ENCODE measurements at regions of chr6 and their contacts with region 1.

Region 1: GRCh38 chr6:20092071-20092566 is 120.2 kb downstream of the MBOAT1 start:
- DNase-seq: no peak
- H3K4me3 Mint-ChIP-seq: no peak overlapping the region
- H3K27ac Mint-ChIP-seq: no peak overlapping the region
- H3K4me1 Mint-ChIP-seq: no peaks in the 10 kb centered on the region
- H3K27me3 Mint-ChIP-seq: no peaks in the 10 kb centered on the region

Region 2: GRCh38 chr6:20126789-20127653 is 34.9 kb after region 1 on chr6:
- intact Hi-C with region 1: loop called (anchors 2 kb)
- DNase-seq: peak; percentile 41
- H3K4me3 Mint-ChIP-seq: no peak overlapping the region
- H3K27ac Mint-ChIP-seq: no peak overlapping the region
- H3K4me1 Mint-ChIP-seq: peaks cover 8% of the 10 kb centered on the region
- H3K27me3 Mint-ChIP-seq: no peaks in the 10 kb centered on the region

Region 3: DNA sequence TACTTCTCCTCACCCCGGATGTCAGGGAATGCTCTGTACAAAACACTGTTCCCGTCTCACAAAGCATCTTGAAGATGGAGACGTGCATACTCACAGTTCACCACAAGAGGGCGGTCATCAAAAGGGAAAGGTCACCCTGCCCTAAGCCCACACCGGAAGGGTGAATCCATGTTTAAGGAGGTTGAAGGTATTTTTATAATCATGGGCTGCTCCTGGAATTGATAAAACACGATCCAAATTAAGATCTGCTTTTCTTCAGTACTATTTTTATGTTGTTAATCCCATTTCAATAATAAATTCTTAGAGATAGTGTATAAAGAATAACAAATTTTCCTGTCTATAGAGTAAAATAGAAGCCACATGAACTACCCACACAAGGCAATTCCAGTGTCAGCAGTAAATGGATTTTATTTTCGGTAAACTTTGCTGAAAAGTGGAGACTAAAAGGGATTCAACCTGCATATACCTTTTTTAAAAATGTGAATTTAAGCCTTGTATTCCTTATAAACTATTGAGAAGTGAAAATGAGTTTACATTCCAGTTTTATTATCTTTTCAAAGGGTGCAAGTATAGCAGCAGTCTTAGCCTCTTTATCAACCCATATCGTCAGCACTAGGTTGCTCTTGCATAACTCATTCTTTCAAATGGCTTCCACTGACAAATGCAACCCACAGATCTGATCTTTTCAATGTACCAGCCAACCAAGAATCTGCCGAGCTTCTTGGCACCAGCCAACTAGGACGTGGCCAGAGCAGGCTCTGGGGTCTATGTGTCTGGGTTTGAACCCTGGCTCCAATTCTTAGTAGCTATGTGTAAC is 199.9 kb after region 1 on chr6:
- intact Hi-C with region 1: loop called (anchors 5 kb)
- DNase-seq: peak; percentile 63
- H3K4me3 Mint-ChIP-seq: no peak overlapping the region
- H3K27ac Mint-ChIP-seq: no peak overlapping the region
- H3K4me1 Mint-ChIP-seq: peaks cover 38% of the 10 kb centered on the region
- H3K27me3 Mint-ChIP-seq: no peaks in the 10 kb centered on the region

Region 4: GRCh38 chr6:20534295-20535262 is 442.5 kb after region 1 on chr6 and contains the start of gene CDKAL1:
- intact Hi-C with region 1: loop called (anchors 1 kb)
- DNase-seq: peak; percentile 91
- H3K4me3 Mint-ChIP-seq: peak within 1 kb of the TSS; percentile 93
- H3K27ac Mint-ChIP-seq: peak within 1 kb of the TSS; percentile 93
- H3K4me1 Mint-ChIP-seq: peaks cover 51% of the 10 kb centered on the region
- H3K27me3 Mint-ChIP-seq: no peaks in the 10 kb centered on the region
- total RNA-seq, gene CDKAL1: 30.5 and 31.2 TPM in 2 replicates

Region 5: GRCh38 chr6:20802596-20802995 is 710.5 kb after region 1 on chr6:
- intact Hi-C with region 1: no loop called
- DNase-seq: no peak
- H3K4me3 Mint-ChIP-seq: no peak overlapping the region
- H3K27ac Mint-ChIP-seq: no peak overlapping the region
- H3K4me1 Mint-ChIP-seq: no peaks in the 10 kb centered on the region
- H3K27me3 Mint-ChIP-seq: no peaks in the 10 kb centered on the region